ENCODE measurements at regions of chr17 and their contacts with region 1.

Region 1: GRCh38 chr17:2511462-2512369 is at the start of gene METTL16:
- DNase-seq: peak; percentile 99
- total RNA-seq, gene METTL16: 27.6 to 29.4 TPM

Region 2: GRCh38 chr17:2592971-2593820 is 81.5 kb after region 1 on chr17 and contains the start of gene PAFAH1B1:
- intact Hi-C with region 1: loop called in 1 of 2 experiments (anchors 10 kb)
- DNase-seq: peak; percentile 98
- total RNA-seq, gene PAFAH1B1: 129 to 138 TPM